Stomach (tissue), 19 donors: ENCODE measurements at regions of chr9 and their contacts with region 1.

Region 1: GRCh38 chr9:91036826-91037510 is 235.3 kb downstream of the SYK start:
- DNase-seq: peak; percentile 77 to 93
- H3K4me3 ChIP-seq: peak overlapping the region in 1 of 4 donors; percentile 14
- H3K27ac ChIP-seq: peak overlapping the region; percentile 29 to 89 (median 78)
- H3K4me1 ChIP-seq: peaks cover 18 to 25% (median 23%) of the 10 kb centered on the region in 4 donors
- H3K27me3 ChIP-seq: no peaks in the 10 kb centered on the region
- CTCF ChIP-seq: peak in 5 of 7 experiments; percentile 32 to 79 (median 50)
- EP300 ChIP-seq: no peak
- POLR2A ChIP-seq: no peak

Region 2: GRCh38 chr9:90921111-90921510 is 115.9 kb before region 1 on chr9:
- intact Hi-C with region 1: loop called (anchors 10 kb)
- DNase-seq: peak; percentile 68 to 76
- H3K4me3 ChIP-seq: no peak overlapping the region
- H3K27ac ChIP-seq: peak overlapping the region in 1 of 5 donors; percentile 34
- H3K4me1 ChIP-seq: peaks cover 0 to 15% (median 8%) of the 10 kb centered on the region in 4 donors
- H3K27me3 ChIP-seq: peaks cover 0 to 5% (median 0%) of the 10 kb centered on the region in 3 donors
- CTCF ChIP-seq: no peak
- EP300 ChIP-seq: peak; percentile 92
- POLR2A ChIP-seq: no peak

Region 3: GRCh38 chr9:90972057-90972456 is 64.9 kb before region 1 on chr9:
- intact Hi-C with region 1: no loop called
- DNase-seq: no peak
- H3K4me3 ChIP-seq: no peak overlapping the region
- H3K27ac ChIP-seq: peak overlapping the region in 1 of 5 donors; percentile 18
- H3K4me1 ChIP-seq: no peaks in the 10 kb centered on the region
- H3K27me3 ChIP-seq: no peaks in the 10 kb centered on the region
- CTCF ChIP-seq: no peak
- EP300 ChIP-seq: no peak
- POLR2A ChIP-seq: no peak

Region 4: GRCh38 chr9:90991953-90992352 is 45.0 kb before region 1 on chr9:
- intact Hi-C with region 1: no loop called
- DNase-seq: no peak
- H3K4me3 ChIP-seq: no peak overlapping the region
- H3K27ac ChIP-seq: no peak overlapping the region
- H3K4me1 ChIP-seq: no peaks in the 10 kb centered on the region
- H3K27me3 ChIP-seq: no peaks in the 10 kb centered on the region
- CTCF ChIP-seq: no peak
- EP300 ChIP-seq: no peak
- POLR2A ChIP-seq: no peak

Region 5: GRCh38 chr9:91411096-91411771 is 374.3 kb after region 1 on chr9:
- intact Hi-C with region 1: no loop called
- DNase-seq: peak in 1 of 2 donors; percentile 26
- H3K4me3 ChIP-seq: no peak overlapping the region
- H3K27ac ChIP-seq: peak overlapping the region in 2 of 5 donors; percentile 49 to 53
- H3K4me1 ChIP-seq: peaks cover 0 to 39% (median 7%) of the 10 kb centered on the region in 4 donors
- H3K27me3 ChIP-seq: no peaks in the 10 kb centered on the region
- CTCF ChIP-seq: no peak
- EP300 ChIP-seq: no peak
- POLR2A ChIP-seq: no peak

Region 6: DNA sequence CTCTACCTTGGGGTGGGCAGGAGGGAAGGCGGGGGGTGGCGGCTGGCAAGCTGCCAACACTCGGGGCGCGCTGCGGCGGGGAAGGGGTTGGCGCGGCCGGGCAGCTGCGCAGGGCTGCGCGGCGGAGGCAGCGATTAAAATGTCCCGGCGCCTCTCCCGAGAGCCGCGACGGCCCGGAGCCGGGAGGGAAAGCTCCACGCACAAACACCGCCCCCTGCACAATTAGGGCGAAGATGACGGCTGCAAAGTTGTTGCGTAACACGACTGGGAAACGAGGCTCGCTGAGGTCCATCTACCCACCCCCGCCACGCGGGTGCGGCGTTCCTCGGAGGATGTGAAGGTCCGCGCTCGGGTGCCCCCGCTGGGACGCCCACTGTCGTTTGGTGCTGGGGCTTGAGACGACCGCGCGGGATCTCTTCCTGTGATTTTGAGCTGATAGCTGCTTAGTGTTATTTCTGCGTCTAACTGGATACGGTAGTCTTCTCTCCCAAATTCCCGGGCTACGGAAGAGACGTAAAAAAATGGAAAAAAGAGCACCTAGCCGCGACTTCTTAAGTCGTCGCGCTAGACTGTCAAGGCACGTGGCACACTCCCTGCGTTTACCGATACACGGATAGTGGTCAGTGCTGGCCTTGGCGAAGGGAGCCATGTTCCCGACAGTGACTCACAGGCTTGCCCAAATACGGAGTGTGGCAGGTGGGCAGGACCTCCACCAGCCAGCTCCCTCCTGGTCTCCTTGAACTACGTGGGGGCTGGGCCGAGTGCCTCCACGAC is 387.6 kb after region 1 on chr9:
- intact Hi-C with region 1: loop called (anchors 5 kb)
- DNase-seq: peak; percentile 80 to 94
- H3K4me3 ChIP-seq: peak overlapping the region; percentile 59 to 88 (median 74)
- H3K27ac ChIP-seq: peak overlapping the region; percentile 89 to 100 (median 99)
- H3K4me1 ChIP-seq: peaks cover 18 to 71% (median 34%) of the 10 kb centered on the region in 4 donors
- H3K27me3 ChIP-seq: peaks cover 0 to 5% (median 0%) of the 10 kb centered on the region in 3 donors
- CTCF ChIP-seq: no peak
- EP300 ChIP-seq: peak; percentile 90
- POLR2A ChIP-seq: no peak

Region 7: GRCh38 chr9:91451519-91452270 is 414.7 kb after region 1 on chr9:
- intact Hi-C with region 1: no loop called
- DNase-seq: no peak
- H3K4me3 ChIP-seq: no peak overlapping the region
- H3K27ac ChIP-seq: no peak overlapping the region
- H3K4me1 ChIP-seq: no peaks in the 10 kb centered on the region
- H3K27me3 ChIP-seq: no peaks in the 10 kb centered on the region
- CTCF ChIP-seq: no peak
- EP300 ChIP-seq: no peak
- POLR2A ChIP-seq: no peak